ENCODE measurements at regions of chr1 and their contacts with region 1.

Region 1: GRCh38 chr1:109984456-109985275 is at the start of gene AHCYL1:
- DNase-seq: peak; percentile 100
- H3K4me3 Mint-ChIP-seq: peak within 1 kb of the TSS; percentile 90
- H3K27ac Mint-ChIP-seq: peak within 1 kb of the TSS; percentile 93
- H3K4me1 Mint-ChIP-seq: peaks cover 32% of the 10 kb centered on the region
- H3K27me3 Mint-ChIP-seq: peaks cover 19% of the 10 kb centered on the region

Region 2: GRCh38 chr1:109548321-109549267 is 436.1 kb before region 1 on chr1 and contains the start of gene GNAI3:
- CTCF ChIA-PET with region 1: interaction called, 20 read pairs
- DNase-seq: peak; percentile 99
- H3K4me3 Mint-ChIP-seq: peak within 1 kb of the TSS; percentile 87
- H3K27ac Mint-ChIP-seq: peak within 1 kb of the TSS; percentile 98
- H3K4me1 Mint-ChIP-seq: peaks cover 47% of the 10 kb centered on the region
- H3K27me3 Mint-ChIP-seq: peaks cover 5% of the 10 kb centered on the region

Region 3: GRCh38 chr1:109783429-109783831 is 201.2 kb before region 1 on chr1:
- CTCF ChIA-PET with region 1: interaction called, 613 read pairs
- DNase-seq: no peak
- H3K4me3 Mint-ChIP-seq: no peak overlapping the region
- H3K27ac Mint-ChIP-seq: no peak overlapping the region
- H3K4me1 Mint-ChIP-seq: peaks cover 19% of the 10 kb centered on the region
- H3K27me3 Mint-ChIP-seq: peaks cover 8% of the 10 kb centered on the region

Region 4: DNA sequence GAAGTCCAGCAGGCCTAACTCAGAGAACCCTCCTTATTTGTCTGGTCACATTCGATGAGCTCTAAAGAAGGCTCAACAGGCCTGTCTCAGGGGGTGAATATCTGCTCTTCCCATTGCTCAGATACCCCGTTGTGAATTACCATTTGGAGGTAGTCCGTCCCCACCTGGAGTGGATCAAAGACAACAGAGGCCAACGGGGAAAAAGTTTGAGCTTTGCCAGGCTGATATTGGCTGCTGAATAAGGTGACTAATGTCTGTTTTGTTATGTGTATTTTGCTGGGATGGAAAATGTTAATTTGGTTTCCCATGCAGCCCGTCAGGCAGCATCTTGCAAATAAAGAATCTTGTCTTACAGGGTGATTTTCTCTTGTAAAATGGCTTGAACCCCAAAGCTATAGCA is 151.7 kb before region 1 on chr1:
- CTCF ChIA-PET with region 1: no interaction called
- DNase-seq: no peak
- H3K4me3 Mint-ChIP-seq: no peak overlapping the region
- H3K27ac Mint-ChIP-seq: no peak overlapping the region
- H3K4me1 Mint-ChIP-seq: no peaks in the 10 kb centered on the region
- H3K27me3 Mint-ChIP-seq: peaks cover 30% of the 10 kb centered on the region

Region 5: GRCh38 chr1:109917768-109918606 is 66.7 kb before region 1 on chr1:
- CTCF ChIA-PET with region 1: interaction called, 11 read pairs
- DNase-seq: no peak
- H3K4me3 Mint-ChIP-seq: no peak overlapping the region
- H3K27ac Mint-ChIP-seq: no peak overlapping the region
- H3K4me1 Mint-ChIP-seq: peaks cover 19% of the 10 kb centered on the region
- H3K27me3 Mint-ChIP-seq: peaks cover 4% of the 10 kb centered on the region

Region 6: GRCh38 chr1:109996476-109996875 is 11.8 kb after region 1 on chr1:
- CTCF ChIA-PET with region 1: interaction called, 15 read pairs
- DNase-seq: no peak
- H3K4me3 Mint-ChIP-seq: no peak overlapping the region
- H3K27ac Mint-ChIP-seq: no peak overlapping the region
- H3K4me1 Mint-ChIP-seq: peaks cover 4% of the 10 kb centered on the region
- H3K27me3 Mint-ChIP-seq: no peaks in the 10 kb centered on the region

Region 7: DNA sequence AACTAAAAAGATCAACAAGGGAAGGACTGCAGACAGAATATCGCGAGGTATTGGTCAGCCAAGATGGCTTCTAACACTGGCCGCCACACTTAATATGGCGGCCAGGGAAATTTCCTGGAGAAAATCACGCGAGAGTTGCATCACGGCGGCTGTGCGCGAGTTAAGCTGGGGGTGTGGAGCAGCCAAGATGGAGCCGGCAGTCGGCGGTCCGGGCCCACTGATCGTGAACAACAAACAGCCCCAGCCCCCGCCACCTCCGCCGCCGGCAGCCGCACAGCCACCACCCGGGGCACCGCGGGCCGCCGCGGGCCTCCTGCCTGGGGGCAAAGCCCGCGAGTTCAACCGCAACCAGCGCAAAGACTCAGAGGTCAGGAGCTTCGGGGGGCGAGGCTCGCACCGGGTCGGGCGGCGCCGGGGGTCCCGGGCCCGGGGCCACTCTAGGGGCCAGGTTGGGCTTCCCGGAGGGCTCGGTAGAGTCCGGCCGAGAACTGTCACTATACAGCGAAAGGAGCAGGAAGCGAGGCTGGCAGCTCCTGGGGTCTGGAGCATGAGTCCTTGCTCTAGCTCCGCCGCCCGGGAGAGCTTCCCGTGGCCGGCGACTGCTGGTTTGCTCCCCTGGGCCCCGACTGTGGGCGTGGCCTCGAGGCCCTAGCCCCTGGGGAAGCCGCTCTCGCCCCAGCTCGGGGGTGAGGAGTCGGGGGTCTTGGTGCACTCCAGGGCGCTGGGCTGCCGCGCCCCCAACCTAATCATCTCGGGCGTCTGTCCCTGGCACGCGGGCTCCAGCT is 50.0 kb after region 1 on chr1 and contains the start of gene STRIP1:
- CTCF ChIA-PET with region 1: interaction called, 11 read pairs
- DNase-seq: peak; percentile 96
- H3K4me3 Mint-ChIP-seq: peak within 1 kb of the TSS; percentile 93
- H3K27ac Mint-ChIP-seq: peak within 1 kb of the TSS; percentile 89
- H3K4me1 Mint-ChIP-seq: peaks cover 63% of the 10 kb centered on the region
- H3K27me3 Mint-ChIP-seq: no peaks in the 10 kb centered on the region

Measured in activated naive CD4-positive, alpha-beta T cell treated with anti-CD3 and anti-CD28 coated beads, Interleukin-2, amount 10 ng/mL, durations not matched to agents 7 days and 5 days (primary cell).